ENCODE measurements at regions of chr6 and their contacts with region 1.

Region 1: GRCh38 chr6:71349395-71349794 is 60.8 kb downstream of the OGFRL1 start:
- DNase-seq: no peak
- ATAC-seq: no peak
- H3K4me3 ChIP-seq: no peak overlapping the region
- H3K27ac ChIP-seq: no peak overlapping the region
- H3K4me1 ChIP-seq: no peaks in the 10 kb centered on the region
- H3K27me3 ChIP-seq: no peaks in the 10 kb centered on the region

Region 2: GRCh38 chr6:70973604-70974003 is 375.8 kb before region 1 on chr6:
- intact Hi-C with region 1: no loop called
- DNase-seq: no peak
- ATAC-seq: no peak
- H3K4me3 ChIP-seq: no peak overlapping the region
- H3K27ac ChIP-seq: no peak overlapping the region
- H3K4me1 ChIP-seq: no peaks in the 10 kb centered on the region
- H3K27me3 ChIP-seq: no peaks in the 10 kb centered on the region

Region 3: DNA sequence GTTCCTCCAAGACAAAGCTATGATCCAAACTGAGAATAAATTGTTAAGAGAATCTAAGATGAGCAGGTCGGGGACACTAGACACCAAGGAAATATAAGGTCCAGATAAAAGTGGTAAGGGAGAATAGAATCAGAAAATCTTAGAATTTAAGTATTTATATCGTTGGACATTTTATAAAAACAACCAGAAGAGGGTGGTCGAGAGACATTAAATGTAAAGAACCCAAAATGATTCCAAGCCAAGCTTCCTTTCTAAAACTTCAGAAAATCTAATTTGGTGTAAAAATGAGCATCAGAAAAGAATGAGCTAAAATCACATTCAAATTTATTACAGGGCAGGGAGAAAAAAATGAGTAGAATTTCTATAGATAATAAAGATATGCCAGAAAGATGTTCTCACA is 158.6 kb before region 1 on chr6:
- intact Hi-C with region 1: loop called in 2 of 4 experiments (anchors 5 to 10 kb)
- DNase-seq: no peak
- ATAC-seq: no peak
- H3K4me3 ChIP-seq: no peak overlapping the region
- H3K27ac ChIP-seq: no peak overlapping the region
- H3K4me1 ChIP-seq: no peaks in the 10 kb centered on the region
- H3K27me3 ChIP-seq: no peaks in the 10 kb centered on the region

Measured in right cardiac atrium (tissue), 5 donors.